Gastrocnemius medialis (tissue), 4 donors: ENCODE measurements at regions of chr3 and their contacts with region 1.

Region 1: GRCh38 chr3:53881691-53882593 is at the start of gene ACTR8:
- DNase-seq: peak; percentile 72 to 73
- ATAC-seq: peak; percentile 91
- H3K4me3 ChIP-seq: peak within 1 kb of the TSS; percentile 97 to 100 (median 98)
- H3K27ac ChIP-seq: peak within 1 kb of the TSS; percentile 87 to 93 (median 90)
- H3K4me1 ChIP-seq: peaks cover 13 to 16% of the 10 kb centered on the region in 2 donors
- H3K27me3 ChIP-seq: no peaks in the 10 kb centered on the region
- CTCF ChIP-seq: peak in 3 of 5 experiments; percentile 18 to 24 (median 19)
- POLR2A ChIP-seq: peak; percentile 58
- total RNA-seq, gene ACTR8: 13.6 to 24.9 (median 19.8) TPM

Region 2: DNA sequence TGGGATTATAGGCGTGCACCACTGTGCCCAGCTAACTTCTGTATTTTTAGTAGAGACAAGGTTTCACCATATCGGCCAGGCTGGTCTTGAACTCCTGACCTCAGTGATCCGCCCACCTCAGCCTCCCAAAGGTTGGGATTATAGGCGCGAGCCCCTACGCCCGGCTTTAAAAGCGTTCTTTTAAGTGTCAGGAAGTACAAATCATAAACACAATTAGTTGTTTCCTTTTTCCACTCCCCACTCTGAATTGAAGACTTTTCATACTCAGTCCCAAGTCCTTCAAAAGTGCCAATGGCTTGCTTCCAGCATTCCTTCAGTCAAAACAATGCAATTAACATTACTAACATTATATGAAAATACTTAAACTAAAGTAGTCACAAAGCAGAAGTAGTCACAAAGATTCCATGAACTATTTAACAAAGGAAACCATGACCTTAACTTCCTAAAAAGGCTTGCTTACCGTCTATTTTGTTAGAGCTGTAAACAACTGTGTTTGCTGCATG is 1611.6 kb before region 1 on chr3:
- in situ Hi-C with region 1: no loop called
- intact Hi-C with region 1: no loop called
- DNase-seq: no peak
- ATAC-seq: peak in 1 of 2 donors; percentile 30
- H3K4me3 ChIP-seq: no peak overlapping the region
- H3K27ac ChIP-seq: peak overlapping the region; percentile 39 to 64 (median 47)
- H3K4me1 ChIP-seq: peaks cover 48 to 57% of the 10 kb centered on the region in 2 donors
- H3K27me3 ChIP-seq: no peaks in the 10 kb centered on the region
- CTCF ChIP-seq: no peak
- POLR2A ChIP-seq: no peak

Region 3: GRCh38 chr3:53845103-53845880 is 36.6 kb before region 1 on chr3:
- in situ Hi-C with region 1: no loop called
- intact Hi-C with region 1: loop called (anchors 2 kb)
- DNase-seq: peak; percentile 51 to 70
- ATAC-seq: peak; percentile 88 to 89
- H3K4me3 ChIP-seq: peak overlapping the region; percentile 67 to 82 (median 74)
- H3K27ac ChIP-seq: peak overlapping the region; percentile 74 to 88 (median 86)
- H3K4me1 ChIP-seq: peaks cover 0 to 5% of the 10 kb centered on the region in 2 donors
- H3K27me3 ChIP-seq: no peaks in the 10 kb centered on the region
- CTCF ChIP-seq: peak in 3 of 5 experiments; percentile 3 to 50 (median 39)
- POLR2A ChIP-seq: peak in 1 of 2 donors; percentile 44

Region 4: DNA sequence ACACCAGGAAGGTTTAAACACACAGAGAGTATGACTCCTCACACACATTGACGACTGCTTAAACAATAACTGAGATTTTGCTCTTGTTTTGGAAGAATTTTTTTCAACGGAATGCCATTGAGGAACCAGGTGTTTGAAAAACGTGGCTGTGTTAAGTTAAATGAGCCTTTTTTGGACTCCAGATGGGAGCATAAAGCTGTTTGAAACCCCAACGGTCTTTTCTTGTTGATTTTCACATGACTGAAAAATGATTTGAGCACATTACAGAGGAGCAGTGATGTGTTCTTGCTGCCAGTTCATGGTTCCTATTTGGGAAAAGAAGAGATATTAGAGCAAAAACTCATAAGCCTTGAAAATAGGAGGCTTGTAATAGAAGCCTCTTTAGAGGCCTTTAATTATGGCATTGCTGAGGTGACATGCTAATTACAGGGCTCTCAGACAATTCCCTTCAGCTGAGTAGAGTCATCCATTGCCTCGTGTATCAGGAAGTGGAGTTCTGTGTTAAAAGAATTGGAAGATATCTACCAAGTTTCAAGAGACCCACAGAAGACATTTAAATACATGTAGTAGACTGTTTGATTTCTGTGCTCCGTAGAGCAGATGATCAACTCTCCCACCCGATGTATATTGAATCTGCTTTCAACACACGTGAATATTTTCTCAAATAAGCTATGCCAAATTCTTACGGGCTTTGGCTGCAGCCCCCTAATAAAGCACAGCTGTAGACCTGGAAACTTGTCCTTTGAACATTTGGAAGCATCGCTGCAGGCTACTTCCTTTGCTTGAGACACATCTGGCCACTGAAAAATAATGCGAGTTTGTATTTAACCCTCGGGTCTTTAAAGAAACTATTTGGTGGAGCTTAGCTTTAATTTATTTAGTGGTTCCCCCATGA is 107.8 kb after region 1 on chr3:
- in situ Hi-C with region 1: no loop called
- intact Hi-C with region 1: no loop called
- DNase-seq: no peak
- ATAC-seq: no peak
- H3K4me3 ChIP-seq: no peak overlapping the region
- H3K27ac ChIP-seq: no peak overlapping the region
- H3K4me1 ChIP-seq: no peaks in the 10 kb centered on the region
- H3K27me3 ChIP-seq: no peaks in the 10 kb centered on the region
- CTCF ChIP-seq: no peak
- POLR2A ChIP-seq: no peak